ENCODE measurements at regions of chrX and their contacts with region 1.

Region 1: GRCh38 chrX:121308276-121308805 is 260.9 kb downstream of the GLUD2 start:
- DNase-seq: peak; percentile 83
- H3K4me3 Mint-ChIP-seq: peak overlapping the region; percentile 32
- H3K27ac Mint-ChIP-seq: peak overlapping the region; percentile 77
- H3K4me1 Mint-ChIP-seq: peaks cover 23% of the 10 kb centered on the region
- H3K27me3 Mint-ChIP-seq: no peaks in the 10 kb centered on the region

Region 2: GRCh38 chrX:120499301-120500072 is 808.9 kb before region 1 on chrX:
- CTCF ChIA-PET with region 1: no interaction called
- intact Hi-C with region 1: loop called (anchors 1 kb)
- DNase-seq: no peak
- H3K4me3 Mint-ChIP-seq: no peak overlapping the region
- H3K27ac Mint-ChIP-seq: no peak overlapping the region
- H3K4me1 Mint-ChIP-seq: peaks cover 2% of the 10 kb centered on the region
- H3K27me3 Mint-ChIP-seq: no peaks in the 10 kb centered on the region

Region 3: DNA sequence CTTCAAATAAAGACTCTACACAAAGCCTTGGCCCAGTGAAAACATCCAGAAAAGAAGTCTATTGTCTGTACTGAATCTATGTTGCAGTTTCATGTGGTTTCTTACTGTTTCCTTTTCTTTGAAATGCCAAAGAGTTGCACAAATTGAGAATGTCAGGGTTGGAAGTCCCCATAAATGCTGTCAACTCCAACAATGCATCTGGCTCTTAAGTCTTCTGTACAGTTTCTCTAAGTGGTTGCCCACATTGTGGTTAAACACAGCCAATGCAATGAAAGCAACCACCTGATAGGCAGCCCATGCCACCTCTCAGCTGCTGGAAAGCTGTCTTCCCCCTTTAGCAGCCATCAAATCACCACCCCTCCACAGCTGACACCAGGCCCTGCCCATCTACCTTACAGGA is 611.3 kb before region 1 on chrX:
- CTCF ChIA-PET with region 1: no interaction called
- intact Hi-C with region 1: loop called (anchors 5 kb)
- DNase-seq: peak; percentile 69
- H3K4me3 Mint-ChIP-seq: no peak overlapping the region
- H3K27ac Mint-ChIP-seq: peak overlapping the region; percentile 83
- H3K4me1 Mint-ChIP-seq: peaks cover 27% of the 10 kb centered on the region
- H3K27me3 Mint-ChIP-seq: no peaks in the 10 kb centered on the region

Region 4: GRCh38 chrX:120790118-120790517 is 518.2 kb before region 1 on chrX:
- CTCF ChIA-PET with region 1: interaction called, 3 read pairs
- intact Hi-C with region 1: loop called (anchors 2 kb)
- DNase-seq: peak; percentile 23
- H3K4me3 Mint-ChIP-seq: peak overlapping the region; percentile 43
- H3K27ac Mint-ChIP-seq: peak overlapping the region; percentile 83
- H3K4me1 Mint-ChIP-seq: peaks cover 19% of the 10 kb centered on the region
- H3K27me3 Mint-ChIP-seq: no peaks in the 10 kb centered on the region

Region 5: GRCh38 chrX:121160987-121161386 is 147.4 kb before region 1 on chrX:
- CTCF ChIA-PET with region 1: no interaction called
- intact Hi-C with region 1: loop called (anchors 1 kb)
- DNase-seq: no peak
- H3K4me3 Mint-ChIP-seq: peak overlapping the region; percentile 16
- H3K27ac Mint-ChIP-seq: peak overlapping the region; percentile 82
- H3K4me1 Mint-ChIP-seq: peaks cover 45% of the 10 kb centered on the region
- H3K27me3 Mint-ChIP-seq: no peaks in the 10 kb centered on the region

Region 6: GRCh38 chrX:121256647-121257046 is 51.7 kb before region 1 on chrX:
- CTCF ChIA-PET with region 1: no interaction called
- intact Hi-C with region 1: loop called (anchors 1 kb)
- DNase-seq: peak; percentile 14
- H3K4me3 Mint-ChIP-seq: no peak overlapping the region
- H3K27ac Mint-ChIP-seq: no peak overlapping the region
- H3K4me1 Mint-ChIP-seq: peaks cover 17% of the 10 kb centered on the region
- H3K27me3 Mint-ChIP-seq: no peaks in the 10 kb centered on the region

Region 7: GRCh38 chrX:121337816-121338215 is 29.5 kb after region 1 on chrX:
- CTCF ChIA-PET with region 1: no interaction called
- intact Hi-C with region 1: no loop called
- DNase-seq: no peak
- H3K4me3 Mint-ChIP-seq: no peak overlapping the region
- H3K27ac Mint-ChIP-seq: no peak overlapping the region
- H3K4me1 Mint-ChIP-seq: no peaks in the 10 kb centered on the region
- H3K27me3 Mint-ChIP-seq: no peaks in the 10 kb centered on the region

Region 8: GRCh38 chrX:121579016-121579760 is 270.8 kb after region 1 on chrX:
- CTCF ChIA-PET with region 1: no interaction called
- intact Hi-C with region 1: loop called (anchors 1 kb)
- DNase-seq: peak; percentile 46
- H3K4me3 Mint-ChIP-seq: no peak overlapping the region
- H3K27ac Mint-ChIP-seq: no peak overlapping the region
- H3K4me1 Mint-ChIP-seq: peaks cover 13% of the 10 kb centered on the region
- H3K27me3 Mint-ChIP-seq: peaks cover under 1% of the 10 kb centered on the region